Lower leg skin (tissue), 4 donors: ENCODE measurements at regions of chr19 and their contacts with region 1.

Region 1: GRCh38 chr19:13634658-13635057 is 128.4 kb upstream of the CACNA1A start:
- DNase-seq: no peak
- H3K4me3 ChIP-seq: no peak overlapping the region
- CTCF ChIP-seq: no peak
- POLR2A ChIP-seq: no peak

Region 2: DNA sequence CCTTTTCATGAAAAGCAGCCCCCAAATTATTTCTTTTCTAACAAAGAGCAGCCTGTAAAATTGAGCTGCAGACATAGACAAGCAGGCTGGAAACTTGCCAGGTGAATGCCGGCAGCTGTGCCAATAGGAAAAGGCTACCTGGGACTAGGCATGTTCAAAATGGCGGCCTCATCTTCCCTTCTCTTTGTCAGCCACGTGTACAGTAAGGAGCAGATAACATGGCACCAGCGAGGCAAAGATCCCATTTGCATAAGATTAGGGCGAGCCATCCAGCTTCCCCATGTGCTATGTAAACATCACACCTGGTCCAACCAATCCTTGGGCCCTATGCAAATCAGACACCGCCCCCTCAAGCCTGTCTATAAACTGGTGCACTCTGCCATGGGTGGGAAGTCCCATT is 97.2 kb before region 1 on chr19:
- intact Hi-C with region 1: no loop called
- DNase-seq: no peak
- H3K4me3 ChIP-seq: no peak overlapping the region
- CTCF ChIP-seq: no peak
- POLR2A ChIP-seq: no peak

Region 3: GRCh38 chr19:13604902-13605586 is 29.6 kb before region 1 on chr19:
- intact Hi-C with region 1: loop called (anchors 1 kb)
- DNase-seq: no peak
- H3K4me3 ChIP-seq: no peak overlapping the region
- CTCF ChIP-seq: no peak
- POLR2A ChIP-seq: no peak